B cell (primary cell): ENCODE measurements at regions of chr17 and their contacts with region 1.

Region 1: DNA sequence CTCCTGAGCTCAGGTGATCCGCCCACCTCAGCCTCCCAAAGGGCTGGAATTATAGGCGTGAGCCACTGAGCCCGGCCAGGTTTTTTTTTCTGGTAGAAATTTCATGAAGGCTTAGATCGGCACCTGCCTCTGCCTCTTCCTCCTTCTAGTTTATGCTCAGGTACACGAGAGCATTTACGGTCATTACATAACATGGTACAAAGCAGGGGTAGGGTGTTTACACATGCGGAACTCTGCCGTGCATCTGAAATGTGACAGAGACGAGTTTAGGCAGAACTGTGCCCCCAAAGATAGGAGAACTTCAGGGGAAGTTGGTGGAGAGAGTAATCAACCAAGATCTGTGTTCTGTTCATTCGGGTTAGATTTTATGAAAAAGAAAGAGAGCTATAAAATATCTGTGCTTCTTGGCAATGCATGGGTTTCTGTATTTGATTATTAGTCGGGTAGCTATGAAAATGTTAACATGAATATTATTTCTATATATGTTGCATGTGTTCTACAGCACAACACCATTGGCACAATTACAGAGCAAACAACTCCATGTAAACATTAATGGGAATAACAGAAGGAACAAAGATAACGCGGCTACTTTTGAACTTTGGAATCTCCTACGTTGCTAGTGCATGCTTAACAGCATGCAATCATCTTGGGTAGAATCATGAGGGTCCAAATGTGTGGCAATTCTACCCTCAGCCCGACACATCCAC is 23.5 kb upstream of the MAP2K6 start:
- DNase-seq: no peak
- ATAC-seq: no peak
- H3K4me3 ChIP-seq: no peak overlapping the region
- H3K4me3 Mint-ChIP-seq: no peak overlapping the region
- H3K27ac ChIP-seq: no peak overlapping the region
- H3K27ac Mint-ChIP-seq: no peak overlapping the region
- H3K4me1 ChIP-seq: no peaks in the 10 kb centered on the region
- H3K4me1 Mint-ChIP-seq: no peaks in the 10 kb centered on the region
- H3K27me3 ChIP-seq: no peaks in the 10 kb centered on the region
- H3K27me3 Mint-ChIP-seq: peaks cover 38% of the 10 kb centered on the region
- CTCF ChIP-seq: no peak

Region 2: GRCh38 chr17:69235338-69235930 is 155.5 kb before region 1 on chr17:
- CTCF ChIA-PET with region 1: no interaction called
- POLR2A ChIA-PET with region 1: no interaction called
- intact Hi-C with region 1: no loop called
- DNase-seq: peak; percentile 81
- ATAC-seq: peak; percentile 87
- H3K4me3 ChIP-seq: no peak overlapping the region
- H3K4me3 Mint-ChIP-seq: no peak overlapping the region
- H3K27ac ChIP-seq: no peak overlapping the region
- H3K27ac Mint-ChIP-seq: no peak overlapping the region
- H3K4me1 ChIP-seq: peaks cover 0 to 4% of the 10 kb centered on the region in 2 donors
- H3K4me1 Mint-ChIP-seq: peaks cover 4% of the 10 kb centered on the region
- H3K27me3 ChIP-seq: no peaks in the 10 kb centered on the region
- H3K27me3 Mint-ChIP-seq: no peaks in the 10 kb centered on the region
- CTCF ChIP-seq: peak; percentile 89

Region 3: DNA sequence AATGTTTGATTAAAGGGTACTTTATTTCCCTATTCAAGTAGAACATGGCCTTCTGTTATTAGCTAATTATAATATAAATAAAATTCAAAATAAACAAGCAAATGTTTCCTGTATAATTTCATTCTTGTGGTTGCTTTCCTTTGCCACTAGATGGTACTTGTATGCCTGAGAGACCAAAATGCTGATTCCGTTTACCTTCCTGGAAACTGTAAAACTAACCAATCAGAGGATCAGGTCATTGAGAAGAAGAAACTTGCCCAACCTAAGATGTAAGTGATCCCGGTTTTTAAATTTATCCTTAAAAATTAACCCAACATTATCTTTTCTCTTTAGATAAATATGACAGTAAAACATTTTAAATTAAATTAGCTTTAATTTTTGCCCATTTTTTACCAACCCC is 55.9 kb before region 1 on chr17:
- CTCF ChIA-PET with region 1: interaction called, 12 read pairs
- POLR2A ChIA-PET with region 1: no interaction called
- intact Hi-C with region 1: no loop called
- DNase-seq: peak; percentile 19
- ATAC-seq: peak; percentile 31
- H3K4me3 ChIP-seq: no peak overlapping the region
- H3K4me3 Mint-ChIP-seq: no peak overlapping the region
- H3K27ac ChIP-seq: no peak overlapping the region
- H3K27ac Mint-ChIP-seq: no peak overlapping the region
- H3K4me1 ChIP-seq: no peaks in the 10 kb centered on the region
- H3K4me1 Mint-ChIP-seq: no peaks in the 10 kb centered on the region
- H3K27me3 ChIP-seq: peaks cover 0 to 14% (median 1%) of the 10 kb centered on the region in 4 experiments
- H3K27me3 Mint-ChIP-seq: peaks cover 25% of the 10 kb centered on the region
- CTCF ChIP-seq: peak; percentile 19